Right ventricle myocardium inferior (tissue), 1 donor: ENCODE measurements at regions of chr22 and their contacts with region 1.

Region 1: GRCh38 chr22:28019881-28020871 is 101.1 kb upstream of the PITPNB start:
- DNase-seq: peak; percentile 87
- ATAC-seq: peak; percentile 66

Region 2: GRCh38 chr22:28051787-28052356 is 31.7 kb after region 1 on chr22:
- intact Hi-C with region 1: loop called (anchors 1 kb)
- DNase-seq: peak; percentile 76
- ATAC-seq: peak; percentile 73

Region 3: DNA sequence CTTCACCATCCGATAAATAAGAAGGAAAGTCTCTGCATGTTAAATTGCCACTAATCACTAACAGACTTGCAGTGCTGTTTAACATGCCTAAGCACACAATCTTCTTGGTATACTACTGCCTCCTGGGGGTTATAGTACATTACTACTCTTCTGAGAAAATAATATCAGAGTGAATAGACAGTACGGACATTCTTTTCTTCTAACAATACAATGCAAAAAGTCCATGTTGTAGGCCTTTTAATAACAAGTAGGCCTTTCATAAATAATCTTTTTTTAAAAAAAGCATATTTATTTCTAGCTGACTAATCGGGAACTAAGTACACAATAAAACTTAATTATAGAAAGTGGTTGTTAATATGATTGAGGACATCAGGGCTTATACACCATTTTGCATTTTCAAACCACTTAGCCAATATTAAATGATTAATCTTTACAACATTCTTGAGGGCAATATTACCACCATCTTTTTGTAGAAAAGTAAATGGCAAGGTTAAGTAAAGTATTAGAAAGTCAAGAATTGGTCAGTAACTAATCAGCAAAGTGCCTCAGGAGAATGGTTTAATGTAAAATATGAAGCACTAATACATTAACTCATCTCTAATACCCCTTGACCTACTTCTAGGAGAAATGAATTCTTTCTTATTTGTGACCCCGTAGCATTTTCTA is 574.8 kb after region 1 on chr22:
- intact Hi-C with region 1: loop called (anchors 1 kb)
- DNase-seq: no peak
- ATAC-seq: peak; percentile 88

Region 4: DNA sequence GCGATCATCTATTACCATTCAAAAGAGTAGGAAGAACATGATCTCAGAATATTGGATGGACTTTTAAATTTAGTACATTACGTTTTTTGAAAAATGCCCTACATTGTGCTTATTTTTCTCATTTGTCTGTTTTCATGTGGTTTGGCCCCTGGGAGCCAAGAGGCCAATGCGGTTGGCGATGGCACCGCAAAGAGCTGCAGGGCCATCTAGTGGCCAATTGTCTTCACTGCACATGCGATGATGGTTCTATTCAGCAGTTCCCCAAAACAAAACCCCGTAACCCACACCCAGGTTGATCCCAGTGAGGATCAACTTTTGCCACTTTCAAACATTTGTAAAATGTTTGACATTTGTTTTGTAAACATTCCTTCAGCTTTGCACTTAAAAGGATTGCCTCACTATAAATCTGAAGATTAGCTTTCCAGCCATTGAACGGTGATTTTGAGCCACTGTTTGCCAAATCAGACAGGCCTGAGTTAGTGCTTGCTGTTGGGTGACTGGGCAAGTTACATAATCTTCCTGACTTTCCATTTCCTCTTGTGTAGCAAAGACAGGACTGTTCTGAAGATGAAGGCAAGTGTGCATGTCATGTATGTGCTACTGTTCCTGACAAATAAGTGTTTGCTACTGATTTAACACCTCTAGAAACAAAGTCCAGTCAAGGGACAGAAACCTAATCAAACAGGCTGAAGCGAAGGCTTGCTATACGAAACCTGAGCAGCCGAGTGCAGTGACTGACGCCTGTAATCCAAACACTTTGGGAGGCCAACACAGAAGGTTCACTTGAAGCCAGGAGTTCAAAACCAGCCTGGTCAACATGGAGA is 809.4 kb after region 1 on chr22:
- intact Hi-C with region 1: loop called (anchors 10 kb)
- DNase-seq: peak; percentile 88
- ATAC-seq: peak; percentile 87